ENCODE measurements at regions of chr2 and their contacts with region 1.

Region 1: GRCh38 chr2:154875999-154876398 is 177.5 kb downstream of the KCNJ3 start:
- DNase-seq: no peak
- ATAC-seq: no peak
- H3K4me3 Mint-ChIP-seq: no peak overlapping the region
- H3K27ac Mint-ChIP-seq: no peak overlapping the region
- H3K4me1 Mint-ChIP-seq: peaks cover 7% of the 10 kb centered on the region; the same call in 1 of the 2 replicates
- H3K27me3 Mint-ChIP-seq: no peaks in the 10 kb centered on the region
- CTCF ChIP-seq: no peak

Region 2: DNA sequence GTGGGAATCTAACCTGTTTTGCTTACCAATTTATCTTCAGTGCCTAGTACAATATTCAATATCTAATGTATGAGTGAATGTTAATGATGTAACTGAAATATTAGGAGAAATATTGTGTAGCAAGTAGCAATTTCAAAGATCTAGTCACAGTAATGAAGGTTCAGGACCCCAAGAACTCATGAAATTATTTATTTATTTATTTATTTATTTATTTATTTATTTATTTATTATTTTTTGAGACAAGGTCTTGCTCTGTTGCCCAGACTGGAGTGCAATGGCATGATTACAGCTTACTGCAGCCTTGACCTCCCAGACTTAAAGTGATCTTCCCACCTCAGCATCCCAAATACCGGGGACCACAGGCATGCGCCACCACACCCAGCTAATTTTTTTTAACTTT is 50.6 kb before region 1 on chr2:
- CTCF ChIA-PET with region 1: no interaction called
- POLR2A ChIA-PET with region 1: interaction called, 10 read pairs
- DNase-seq: no peak
- ATAC-seq: no peak
- H3K4me3 Mint-ChIP-seq: no peak overlapping the region
- H3K27ac Mint-ChIP-seq: no peak overlapping the region
- H3K4me1 Mint-ChIP-seq: peaks cover 3% of the 10 kb centered on the region; the same call in 1 of the 2 replicates
- H3K27me3 Mint-ChIP-seq: no peaks in the 10 kb centered on the region
- CTCF ChIP-seq: no peak

Region 3: GRCh38 chr2:154914561-154914960 is 38.6 kb after region 1 on chr2:
- CTCF ChIA-PET with region 1: no interaction called
- POLR2A ChIA-PET with region 1: no interaction called
- DNase-seq: no peak
- ATAC-seq: no peak
- H3K4me3 Mint-ChIP-seq: no peak overlapping the region
- H3K27ac Mint-ChIP-seq: no peak overlapping the region
- H3K4me1 Mint-ChIP-seq: peaks cover 19% of the 10 kb centered on the region
- H3K27me3 Mint-ChIP-seq: no peaks in the 10 kb centered on the region
- CTCF ChIP-seq: no peak

Region 4: GRCh38 chr2:155021618-155022017 is 145.6 kb after region 1 on chr2:
- CTCF ChIA-PET with region 1: no interaction called
- POLR2A ChIA-PET with region 1: no interaction called
- DNase-seq: no peak
- ATAC-seq: 0 out of 2 replicates have a peak, but pooled peaks have one; percentile 24
- H3K4me3 Mint-ChIP-seq: no peak overlapping the region
- H3K27ac Mint-ChIP-seq: 0 out of 2 replicates have a peak overlapping the region, but pooled peaks have one; percentile 9
- H3K4me1 Mint-ChIP-seq: no peaks in the 10 kb centered on the region; the same call in 1 of the 2 replicates
- H3K27me3 Mint-ChIP-seq: no peaks in the 10 kb centered on the region
- CTCF ChIP-seq: no peak

Measured in WTC11 (cell line).